Activated naive CD4-positive, alpha-beta T cell treated with anti-CD3 and anti-CD28 coated beads for 36 hours (primary cell): ENCODE measurements at regions of chr2 and their contacts with region 1.

Region 1: DNA sequence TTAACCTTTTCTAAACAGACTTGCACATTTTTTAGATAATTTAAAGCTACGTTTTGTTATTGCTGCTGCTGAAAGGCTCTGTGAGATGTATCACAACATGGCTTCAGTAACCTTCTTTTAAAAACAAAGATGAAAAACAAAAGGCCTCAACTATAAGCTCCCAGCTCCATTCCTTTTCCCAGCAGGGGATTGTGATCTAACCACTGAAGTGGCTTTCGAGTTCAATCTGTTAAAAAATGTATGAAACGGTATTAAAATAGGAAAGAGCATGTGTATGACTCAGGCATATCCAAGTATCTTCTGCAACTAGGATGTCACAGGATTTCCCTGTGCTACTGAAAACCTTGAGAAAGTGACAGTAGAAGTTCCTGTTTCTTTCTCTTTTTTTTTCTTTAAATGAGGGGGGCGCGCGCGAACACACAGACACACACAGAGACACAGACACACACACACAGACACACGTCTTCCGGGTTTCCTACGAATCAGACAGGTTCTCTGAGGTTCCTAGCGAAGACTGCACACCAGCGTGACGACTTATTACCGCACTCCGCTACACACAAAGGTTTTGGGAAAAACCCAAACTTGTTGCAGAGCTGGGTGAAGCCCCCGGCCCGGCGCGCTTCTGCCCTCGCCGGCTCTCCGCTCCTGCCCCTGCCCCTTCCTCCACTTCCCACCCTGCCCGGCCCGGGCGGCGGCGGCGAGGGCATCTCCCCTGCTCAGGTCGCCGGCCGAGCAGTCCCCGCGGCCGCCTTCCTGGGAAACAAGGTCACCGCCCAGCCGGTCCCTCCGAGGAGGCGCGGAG is 86.8 kb downstream of the RBMS1 start:
- DNase-seq: peak; percentile 85
- H3K4me3 Mint-ChIP-seq: peak overlapping the region; percentile 81
- H3K27ac Mint-ChIP-seq: peak overlapping the region; percentile 94
- H3K4me1 Mint-ChIP-seq: peaks cover 75% of the 10 kb centered on the region
- H3K27me3 Mint-ChIP-seq: no peaks in the 10 kb centered on the region

Region 2: GRCh38 chr2:160224060-160224459 is 182.7 kb before region 1 on chr2:
- CTCF ChIA-PET with region 1: no interaction called
- intact Hi-C with region 1: loop called (anchors 1 kb)
- DNase-seq: peak; percentile 58
- H3K4me3 Mint-ChIP-seq: no peak overlapping the region
- H3K27ac Mint-ChIP-seq: peak overlapping the region; percentile 50
- H3K4me1 Mint-ChIP-seq: peaks cover 52% of the 10 kb centered on the region
- H3K27me3 Mint-ChIP-seq: peaks cover 17% of the 10 kb centered on the region

Region 3: DNA sequence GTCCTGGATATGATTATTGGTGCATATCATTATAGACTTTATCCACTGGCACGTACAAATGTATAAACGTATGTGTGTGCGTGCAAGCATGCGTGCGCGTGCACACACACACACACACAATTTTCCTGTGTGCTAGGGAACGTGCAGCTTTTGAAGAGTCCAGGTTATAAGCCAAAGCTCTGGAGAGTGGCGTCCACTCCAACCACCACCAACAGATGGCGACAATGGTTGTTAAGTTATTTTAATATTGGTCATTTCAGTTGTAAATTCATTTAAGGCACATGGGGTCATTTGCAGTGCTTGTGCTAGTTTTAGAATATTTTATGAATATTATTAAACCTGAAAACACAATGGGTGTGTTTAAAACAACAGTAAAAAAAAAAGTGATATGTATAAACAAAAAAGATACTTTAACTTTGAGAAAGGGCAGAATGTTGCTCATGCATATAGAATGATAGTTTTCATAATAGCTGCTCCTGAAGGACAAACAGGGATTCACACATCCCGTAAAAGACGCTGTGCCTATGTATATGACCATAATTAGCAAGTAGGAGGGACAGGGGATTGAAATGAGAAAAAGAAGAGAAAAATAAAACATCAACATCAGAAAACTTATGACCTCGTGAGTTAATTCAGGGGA is 82.5 kb before region 1 on chr2:
- CTCF ChIA-PET with region 1: interaction called, 9 read pairs
- intact Hi-C with region 1: loop called (anchors 1 kb)
- DNase-seq: peak; percentile 69
- H3K4me3 Mint-ChIP-seq: no peak overlapping the region
- H3K27ac Mint-ChIP-seq: no peak overlapping the region
- H3K4me1 Mint-ChIP-seq: peaks cover 78% of the 10 kb centered on the region
- H3K27me3 Mint-ChIP-seq: no peaks in the 10 kb centered on the region

Region 4: DNA sequence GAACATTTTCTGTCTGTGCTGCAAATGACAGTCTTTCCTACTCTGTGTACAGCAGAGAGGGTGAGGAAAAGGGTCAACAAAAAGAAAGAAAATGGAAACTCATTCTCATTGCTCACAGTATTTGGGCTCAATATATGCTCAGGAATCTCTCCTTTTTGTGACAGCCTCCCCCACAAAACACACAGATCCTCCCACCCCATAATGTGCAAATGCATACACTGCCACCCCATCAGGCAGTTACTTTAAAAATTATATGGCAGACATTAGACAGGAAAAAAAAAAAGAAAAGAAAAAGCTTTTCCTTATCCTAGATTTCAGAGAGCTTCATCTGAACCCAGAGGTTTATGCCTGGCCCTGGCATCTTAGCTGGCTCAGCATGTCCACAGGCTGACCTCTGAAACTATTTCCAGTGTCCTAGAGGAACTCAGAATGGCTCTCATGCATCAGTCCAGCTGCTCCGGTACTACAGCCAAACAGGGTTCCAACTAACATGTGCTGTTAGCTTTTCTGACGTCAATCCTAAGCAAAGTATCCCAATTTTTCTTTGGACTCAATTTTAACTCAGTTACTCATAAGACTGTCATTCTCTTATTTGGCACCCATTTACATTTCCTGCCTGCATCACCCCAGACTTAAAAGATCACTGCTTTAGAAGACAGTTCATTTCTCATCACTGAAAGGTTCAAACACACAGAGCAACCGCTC is 19.1 kb before region 1 on chr2:
- CTCF ChIA-PET with region 1: interaction called, 5 read pairs
- intact Hi-C with region 1: loop called (anchors 2 kb)
- DNase-seq: no peak
- H3K4me3 Mint-ChIP-seq: peak overlapping the region; percentile 29
- H3K27ac Mint-ChIP-seq: peak overlapping the region; percentile 56
- H3K4me1 Mint-ChIP-seq: peaks cover 77% of the 10 kb centered on the region
- H3K27me3 Mint-ChIP-seq: no peaks in the 10 kb centered on the region

Region 5: DNA sequence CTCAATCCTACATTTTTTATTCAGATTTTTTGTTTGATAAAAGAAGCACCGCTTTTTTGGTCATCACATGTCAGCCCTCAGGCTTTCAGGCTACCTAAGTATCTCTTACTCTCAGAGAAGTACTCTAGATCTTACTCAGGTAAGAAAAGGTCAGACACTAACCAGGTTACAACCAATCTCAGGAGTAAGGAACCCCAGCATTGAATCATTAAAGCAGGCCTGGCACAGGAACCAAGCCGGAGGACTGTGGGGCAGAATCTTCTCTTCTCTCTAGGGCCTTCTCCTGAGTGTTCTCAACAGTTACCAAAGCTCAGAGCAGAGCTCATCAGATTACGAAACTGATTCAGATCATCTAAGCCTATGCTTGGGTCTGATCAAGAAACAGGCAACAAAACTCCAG is 58.6 kb after region 1 on chr2:
- CTCF ChIA-PET with region 1: interaction called, 3 read pairs
- intact Hi-C with region 1: loop called (anchors 1 kb)
- DNase-seq: peak; percentile 55
- H3K4me3 Mint-ChIP-seq: no peak overlapping the region
- H3K27ac Mint-ChIP-seq: peak overlapping the region; percentile 25
- H3K4me1 Mint-ChIP-seq: peaks cover 81% of the 10 kb centered on the region
- H3K27me3 Mint-ChIP-seq: no peaks in the 10 kb centered on the region

Region 6: GRCh38 chr2:161136696-161137324 is 730.0 kb after region 1 on chr2:
- CTCF ChIA-PET with region 1: no interaction called
- intact Hi-C with region 1: loop called (anchors 5 kb)
- DNase-seq: peak; percentile 48
- H3K4me3 Mint-ChIP-seq: peak overlapping the region; percentile 88
- H3K27ac Mint-ChIP-seq: peak overlapping the region; percentile 98
- H3K4me1 Mint-ChIP-seq: peaks cover 49% of the 10 kb centered on the region
- H3K27me3 Mint-ChIP-seq: no peaks in the 10 kb centered on the region